A549 (cell line): ENCODE measurements at regions of chr5 and their contacts with region 1.

Region 1: GRCh38 chr5:127898551-127899213 is 184.9 kb upstream of the SLC12A2 start:
- DNase-seq: no peak
- ATAC-seq: peak in 1 of 2 experiments; percentile 28; a peak in 2 of 6 replicates
- H3K4me3 ChIP-seq: no peak overlapping the region
- H3K27ac ChIP-seq: peak overlapping the region in 1 of 2 experiments; percentile 21; a peak in 1 of 6 replicates
- H3K4me1 ChIP-seq: peaks cover 10% of the 10 kb centered on the region; the same call in 2 of the 3 replicates
- CTCF ChIP-seq: no peak
- EP300 ChIP-seq: no peak
- POLR2A ChIP-seq: no peak
- RAD21 ChIP-seq: no peak

Region 2: DNA sequence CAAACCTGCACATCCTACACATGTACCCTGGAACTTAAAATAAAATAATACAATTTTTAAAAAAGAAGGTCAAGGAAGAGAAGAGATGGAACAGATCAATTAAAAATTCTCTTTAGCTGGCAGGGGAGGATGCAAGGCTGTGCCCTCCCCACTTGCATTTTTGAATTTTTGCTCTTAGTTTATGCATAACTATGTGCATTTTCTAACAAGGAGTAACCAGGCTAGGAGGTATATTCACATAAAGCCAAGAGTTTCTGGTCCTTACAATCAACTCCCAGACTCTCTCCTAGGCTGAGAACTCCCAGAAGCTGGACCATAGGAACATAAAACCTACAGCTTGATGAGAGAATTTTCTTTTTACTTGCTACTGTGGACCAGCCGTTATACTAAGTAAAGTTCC is 165.7 kb before region 1 on chr5:
- CTCF ChIA-PET with region 1: no interaction called
- POLR2A ChIA-PET with region 1: no interaction called
- DNase-seq: no peak
- ATAC-seq: no peak
- H3K4me3 ChIP-seq: no peak overlapping the region
- H3K27ac ChIP-seq: no peak overlapping the region
- H3K4me1 ChIP-seq: no peaks in the 10 kb centered on the region
- CTCF ChIP-seq: no peak
- EP300 ChIP-seq: no peak
- POLR2A ChIP-seq: no peak
- RAD21 ChIP-seq: no peak

Region 3: DNA sequence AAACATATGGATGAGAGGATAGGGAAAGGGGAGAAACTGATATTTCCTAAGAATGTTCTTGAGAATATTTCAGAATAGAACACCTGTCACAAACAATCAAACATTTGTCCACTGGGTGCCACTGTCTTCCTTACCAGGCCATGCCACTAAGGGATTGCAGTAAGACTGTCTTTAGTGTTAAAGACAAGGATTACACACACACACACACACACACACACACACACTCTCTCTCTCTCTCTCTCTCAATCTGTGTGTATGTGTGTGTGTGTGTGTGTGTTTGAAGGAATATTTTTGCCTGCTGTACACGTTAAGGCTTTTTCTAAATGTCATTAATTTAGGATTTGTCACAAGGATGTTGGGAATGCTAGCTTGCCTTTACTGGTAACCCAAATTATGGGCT is 141.1 kb before region 1 on chr5:
- CTCF ChIA-PET with region 1: interaction called, 12 read pairs
- POLR2A ChIA-PET with region 1: no interaction called
- DNase-seq: peak; percentile 59 to 76
- ATAC-seq: peak; percentile 92 to 96
- H3K4me3 ChIP-seq: no peak overlapping the region
- H3K27ac ChIP-seq: peak overlapping the region in 1 of 2 experiments; percentile 28; a peak in 1 of 6 replicates
- H3K4me1 ChIP-seq: 0 out of 3 replicates have a peak, but pooled peaks cover 6% of the 10 kb centered on the region
- CTCF ChIP-seq: peak; percentile 90
- EP300 ChIP-seq: no peak
- POLR2A ChIP-seq: no peak
- RAD21 ChIP-seq: peak; percentile 93 to 94

Region 4: DNA sequence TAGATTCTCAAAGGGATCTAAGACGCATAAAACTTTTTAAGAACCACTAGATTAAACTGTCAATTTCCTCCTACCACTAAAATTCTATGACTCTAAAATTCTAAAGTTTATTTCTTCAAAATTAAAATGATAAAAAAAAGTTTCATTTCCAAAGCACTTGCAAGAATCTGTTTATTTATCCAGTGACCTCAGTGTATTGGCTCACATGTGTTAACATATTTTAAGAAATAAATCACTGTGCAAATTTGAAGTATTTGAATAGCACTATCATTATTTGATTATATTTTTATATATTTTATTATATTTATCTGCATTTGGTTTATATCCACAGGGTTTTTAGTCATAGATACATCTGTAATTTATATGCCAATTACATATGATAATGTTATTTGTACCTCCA is 122.7 kb after region 1 on chr5:
- CTCF ChIA-PET with region 1: no interaction called
- POLR2A ChIA-PET with region 1: no interaction called
- DNase-seq: no peak
- ATAC-seq: no peak
- H3K4me3 ChIP-seq: no peak overlapping the region
- H3K27ac ChIP-seq: no peak overlapping the region
- H3K4me1 ChIP-seq: peaks cover under 1% of the 10 kb centered on the region; the same call in 1 of the 3 replicates
- CTCF ChIP-seq: no peak
- EP300 ChIP-seq: no peak
- POLR2A ChIP-seq: no peak
- RAD21 ChIP-seq: no peak